ENCODE measurements at regions of chr18 and their contacts with region 1.

Region 1: GRCh38 chr18:79523736-79524180 is 128.0 kb downstream of the NFATC1 start:
- DNase-seq: peak; percentile 15 to 91 (median 88)
- ATAC-seq: peak; percentile 79
- H3K4me3 ChIP-seq: peak overlapping the region; percentile 56
- H3K4me3 Mint-ChIP-seq: peak overlapping the region; percentile 83 to 93 (median 90)
- H3K27ac ChIP-seq: peak overlapping the region; percentile 93
- H3K27ac Mint-ChIP-seq: peak overlapping the region; percentile 88 to 100 (median 98)
- H3K4me1 ChIP-seq: peaks cover 35 to 67% of the 10 kb centered on the region in 2 donors
- H3K4me1 Mint-ChIP-seq: peaks cover 48 to 94% (median 75%) of the 10 kb centered on the region in 7 donors
- H3K27me3 ChIP-seq: no peaks in the 10 kb centered on the region
- H3K27me3 Mint-ChIP-seq: no peaks in the 10 kb centered on the region

Region 2: DNA sequence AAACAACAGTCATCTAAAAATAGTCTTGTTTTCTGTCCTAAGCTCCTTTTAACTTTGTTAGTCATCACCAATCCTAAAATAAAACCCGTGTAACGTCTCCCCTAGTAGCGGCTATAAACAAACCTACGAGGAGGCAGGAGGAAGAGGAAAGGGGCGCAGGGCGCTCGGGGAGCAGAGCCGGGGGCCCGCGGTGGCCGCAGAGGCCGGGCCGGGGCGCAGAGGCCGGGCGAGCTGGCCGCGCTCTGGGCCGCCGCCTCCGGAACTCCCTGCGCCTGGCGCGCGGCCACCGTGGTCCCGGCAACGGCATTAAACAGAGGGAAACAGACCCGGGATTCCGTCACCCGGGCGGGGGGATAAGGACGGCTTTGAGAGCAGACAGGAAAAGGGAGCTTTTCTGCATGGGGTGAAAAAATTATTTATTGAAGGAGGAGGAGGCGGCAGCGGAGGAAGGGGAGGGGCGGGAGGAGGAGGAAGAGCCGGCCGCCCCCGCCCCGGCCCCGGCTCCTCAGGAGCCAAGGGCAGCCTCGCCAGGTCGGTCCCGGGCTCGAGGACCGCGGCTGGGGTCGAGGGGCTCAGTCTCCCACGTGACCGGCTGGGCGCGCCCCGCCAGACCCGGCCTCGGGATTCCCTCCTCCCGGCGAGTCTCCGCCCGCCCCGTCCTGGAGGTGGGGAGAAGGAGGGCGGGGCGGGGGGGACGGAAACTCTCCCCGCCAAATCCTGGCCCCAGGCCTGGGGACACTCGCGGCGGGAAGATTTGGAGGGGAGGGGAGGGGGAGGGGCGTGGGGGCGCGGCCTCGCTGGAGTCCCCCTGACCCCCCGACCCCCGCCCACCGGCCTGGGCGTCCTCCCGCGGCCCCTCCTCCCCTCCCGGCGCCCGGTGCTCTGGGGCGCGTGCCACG is 129.9 kb before region 1 on chr18:
- CTCF ChIA-PET with region 1: interaction called, 8 read pairs
- POLR2A ChIA-PET with region 1: interaction called, 15 read pairs
- intact Hi-C with region 1: loop called (anchors 1 kb)
- DNase-seq: peak in 6 of 9 donors; percentile 47 to 67 (median 54)
- ATAC-seq: peak; percentile 45
- H3K4me3 ChIP-seq: peak overlapping the region; percentile 59
- H3K4me3 Mint-ChIP-seq: peak overlapping the region; percentile 81 to 94 (median 91)
- H3K27ac ChIP-seq: peak overlapping the region; percentile 63
- H3K27ac Mint-ChIP-seq: peak overlapping the region; percentile 67 to 91 (median 85)
- H3K4me1 ChIP-seq: peaks cover 14 to 20% of the 10 kb centered on the region in 2 donors
- H3K4me1 Mint-ChIP-seq: peaks cover 15 to 61% (median 48%) of the 10 kb centered on the region in 7 donors
- H3K27me3 ChIP-seq: peaks cover 0 to 6% of the 10 kb centered on the region in 2 donors
- H3K27me3 Mint-ChIP-seq: peaks cover 0 to 39% (median 0%) of the 10 kb centered on the region in 5 donors

Region 3: DNA sequence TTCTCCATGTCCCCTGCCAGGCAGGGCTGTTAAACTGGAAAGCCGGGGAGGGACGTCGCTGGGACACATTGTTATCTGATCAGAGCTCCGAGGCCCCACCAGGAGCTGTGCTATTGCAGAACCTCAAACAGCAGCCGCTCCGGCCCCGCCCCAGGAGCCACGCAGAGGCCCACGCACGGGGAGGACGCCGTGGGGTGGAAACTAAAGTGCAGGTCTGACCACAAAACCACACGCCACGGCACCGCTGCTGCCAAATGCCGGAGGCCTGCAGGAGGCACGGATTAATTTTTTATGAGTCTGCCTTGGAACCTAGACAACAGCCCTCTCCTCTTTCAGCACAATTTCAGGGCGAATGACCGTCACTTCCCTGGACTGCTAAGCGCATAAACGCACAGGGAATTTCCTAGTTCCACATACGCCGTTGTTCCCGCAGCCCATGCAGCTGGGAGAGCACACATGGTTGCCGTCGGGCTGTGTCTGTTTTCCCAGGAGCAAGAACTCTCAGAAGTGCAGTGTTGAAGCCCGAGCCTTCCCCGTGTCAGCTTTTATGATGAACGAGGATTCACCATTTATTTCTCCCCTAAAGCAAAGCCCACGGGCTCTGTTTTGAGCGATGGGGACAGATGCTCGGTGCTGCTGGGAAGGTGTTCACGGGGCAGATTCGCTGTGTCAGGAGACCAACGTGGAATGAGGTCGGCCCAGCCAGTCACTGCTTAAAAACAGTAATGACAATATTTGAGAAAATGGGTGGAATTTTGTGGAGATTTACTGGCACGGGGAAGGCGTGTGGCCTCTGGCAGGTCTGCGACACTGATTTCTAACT is 84.3 kb before region 1 on chr18:
- CTCF ChIA-PET with region 1: no interaction called
- POLR2A ChIA-PET with region 1: no interaction called
- intact Hi-C with region 1: loop called in 1 of 2 experiments (anchors 1 kb)
- DNase-seq: peak in 8 of 9 donors; percentile 37 to 67 (median 58)
- ATAC-seq: peak; percentile 49
- H3K4me3 ChIP-seq: no peak overlapping the region
- H3K4me3 Mint-ChIP-seq: peak overlapping the region in 7 of 10 donors; percentile 31 to 67 (median 54)
- H3K27ac ChIP-seq: no peak overlapping the region
- H3K27ac Mint-ChIP-seq: peak overlapping the region in 8 of 9 donors; percentile 41 to 96 (median 88)
- H3K4me1 ChIP-seq: peaks cover 0 to 21% of the 10 kb centered on the region in 2 donors
- H3K4me1 Mint-ChIP-seq: peaks cover 14 to 56% (median 41%) of the 10 kb centered on the region in 7 donors
- H3K27me3 ChIP-seq: no peaks in the 10 kb centered on the region
- H3K27me3 Mint-ChIP-seq: no peaks in the 10 kb centered on the region

Region 4: GRCh38 chr18:79644006-79644665 is 120.4 kb after region 1 on chr18:
- CTCF ChIA-PET with region 1: no interaction called
- POLR2A ChIA-PET with region 1: no interaction called
- intact Hi-C with region 1: loop called (anchors 1 to 2 kb)
- DNase-seq: peak; percentile 34 to 74 (median 55)
- ATAC-seq: peak; percentile 87
- H3K4me3 ChIP-seq: no peak overlapping the region
- H3K4me3 Mint-ChIP-seq: no peak overlapping the region
- H3K27ac ChIP-seq: no peak overlapping the region
- H3K27ac Mint-ChIP-seq: no peak overlapping the region
- H3K4me1 ChIP-seq: peaks cover 4 to 5% of the 10 kb centered on the region in 2 donors
- H3K4me1 Mint-ChIP-seq: peaks cover 0 to 3% (median 0%) of the 10 kb centered on the region in 7 donors
- H3K27me3 ChIP-seq: no peaks in the 10 kb centered on the region
- H3K27me3 Mint-ChIP-seq: peaks cover 4 to 13% (median 6%) of the 10 kb centered on the region in 5 donors

Region 5: DNA sequence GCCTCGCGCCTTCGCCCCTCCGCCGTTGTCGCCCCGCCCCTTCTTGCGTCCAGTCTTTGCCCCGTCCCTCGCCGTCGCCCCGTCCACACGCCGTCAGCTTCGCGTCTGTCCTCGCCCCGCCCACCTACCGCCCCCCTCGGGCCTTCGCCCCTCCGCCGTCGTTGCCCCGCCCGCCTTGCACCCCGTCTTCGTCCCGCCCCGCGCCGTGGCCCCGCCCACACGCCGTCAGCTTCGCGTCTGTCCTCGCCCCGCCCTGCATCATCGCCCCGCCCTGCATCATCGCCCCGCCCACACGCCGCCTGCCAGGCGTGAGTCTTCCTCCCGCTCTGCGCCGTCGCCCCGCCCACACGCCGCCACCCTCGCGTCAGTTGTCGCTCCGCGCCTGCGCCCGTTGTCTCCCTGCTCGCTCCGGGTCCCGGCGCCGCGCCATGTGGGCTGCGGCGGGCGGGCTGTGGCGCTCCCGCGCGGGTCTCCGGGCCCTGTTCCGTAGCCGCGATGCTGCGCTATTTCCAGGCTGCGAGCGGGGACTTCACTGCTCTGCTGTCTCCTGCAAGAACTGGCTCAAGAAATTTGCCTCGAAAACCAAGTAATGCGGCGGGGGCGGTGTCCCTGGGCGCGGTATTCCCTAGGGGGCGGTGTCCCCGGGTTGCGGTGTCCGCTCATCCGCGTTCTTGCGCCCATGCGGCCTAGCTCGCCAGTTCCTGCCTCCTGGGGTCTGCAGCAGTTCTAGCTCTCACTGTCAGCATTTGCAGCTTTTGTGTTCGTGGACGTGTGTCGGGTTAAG is 510.5 kb after region 1 on chr18 and contains the start of gene RBFA:
- CTCF ChIA-PET with region 1: no interaction called
- POLR2A ChIA-PET with region 1: no interaction called
- intact Hi-C with region 1: loop called in 1 of 2 experiments (anchors 5 kb)
- DNase-seq: peak; percentile 95 to 100 (median 98)
- ATAC-seq: peak; percentile 88
- H3K4me3 ChIP-seq: peak within 1 kb of the TSS; percentile 83
- H3K4me3 Mint-ChIP-seq: peak within 1 kb of the TSS; percentile 84 to 95 (median 91)
- H3K27ac ChIP-seq: peak within 1 kb of the TSS; percentile 87
- H3K27ac Mint-ChIP-seq: peak within 1 kb of the TSS; percentile 86 to 99 (median 96)
- H3K4me1 ChIP-seq: peaks cover 8 to 14% of the 10 kb centered on the region in 2 donors
- H3K4me1 Mint-ChIP-seq: peaks cover 22 to 36% (median 29%) of the 10 kb centered on the region in 7 donors
- H3K27me3 ChIP-seq: no peaks in the 10 kb centered on the region
- H3K27me3 Mint-ChIP-seq: no peaks in the 10 kb centered on the region
- total RNA-seq, gene RBFA: 17.6 to 23.5 (median 21.7) TPM

Measured in naive thymus-derived CD4-positive, alpha-beta T cell (primary cell).